HEK293 (cell line): ENCODE measurements at regions of chr9 and their contacts with region 1.

Region 1: GRCh38 chr9:137240861-137241489 is at the start of gene TUBB4B:
- H3K4me3 ChIP-seq: peak within 1 kb of the TSS; percentile 83
- H3K27ac ChIP-seq: peak within 1 kb of the TSS; percentile 93
- H3K4me1 ChIP-seq: peaks cover 6% of the 10 kb centered on the region; the same call in 1 of the 2 replicates
- CTCF ChIP-seq: no peak

Region 2: DNA sequence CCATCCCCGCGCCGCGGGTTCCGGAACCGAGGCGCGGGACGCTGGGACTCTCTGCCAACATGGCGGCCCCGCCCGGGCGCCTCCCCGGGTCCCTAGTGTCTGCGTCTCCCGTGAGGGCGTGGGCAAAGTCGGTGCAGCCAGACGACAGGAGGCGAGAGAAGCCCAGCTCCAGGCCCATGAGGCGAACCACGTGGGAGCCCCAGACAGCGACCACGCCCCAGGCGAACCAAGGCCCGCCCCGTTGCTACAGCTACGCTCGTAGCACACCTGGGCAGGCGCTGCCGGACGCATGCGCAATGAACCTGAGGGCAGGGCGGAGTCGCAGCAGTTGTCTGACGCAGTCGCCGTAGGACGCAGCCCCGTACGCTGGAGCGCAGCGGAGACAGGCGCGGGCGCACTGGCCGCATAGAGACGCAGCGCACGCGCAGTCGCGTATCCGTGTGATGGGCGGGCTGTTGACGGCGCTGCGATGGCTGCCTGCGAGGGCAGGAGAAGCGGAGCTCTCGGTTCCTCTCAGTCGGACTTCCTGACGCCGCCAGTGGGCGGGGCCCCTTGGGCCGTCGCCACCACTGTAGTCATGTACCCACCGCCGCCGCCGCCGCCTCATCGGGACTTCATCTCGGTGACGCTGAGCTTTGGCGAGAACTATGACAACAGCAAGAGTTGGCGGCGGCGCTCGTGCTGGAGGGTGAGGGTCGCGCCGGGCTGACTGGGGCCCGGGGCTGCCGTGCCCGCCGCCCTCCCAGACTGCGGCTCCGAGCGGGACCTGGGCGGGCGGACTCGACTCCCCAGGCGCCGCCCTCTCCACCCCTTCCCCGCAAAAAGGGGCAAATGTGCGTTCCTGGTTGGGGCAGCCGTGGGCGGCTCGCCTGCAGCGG is 154.2 kb before region 1 on chr9 and contains the start of gene MAN1B1:
- CTCF ChIA-PET with region 1: interaction called, 6 read pairs
- POLR2A ChIA-PET with region 1: interaction called, 41 read pairs
- H3K4me3 ChIP-seq: peak within 1 kb of the TSS; percentile 57
- H3K27ac ChIP-seq: peak within 1 kb of the TSS; percentile 70
- H3K4me1 ChIP-seq: 0 out of 2 replicates have a peak, but pooled peaks cover 3% of the 10 kb centered on the region
- CTCF ChIP-seq: no peak

Region 3: DNA sequence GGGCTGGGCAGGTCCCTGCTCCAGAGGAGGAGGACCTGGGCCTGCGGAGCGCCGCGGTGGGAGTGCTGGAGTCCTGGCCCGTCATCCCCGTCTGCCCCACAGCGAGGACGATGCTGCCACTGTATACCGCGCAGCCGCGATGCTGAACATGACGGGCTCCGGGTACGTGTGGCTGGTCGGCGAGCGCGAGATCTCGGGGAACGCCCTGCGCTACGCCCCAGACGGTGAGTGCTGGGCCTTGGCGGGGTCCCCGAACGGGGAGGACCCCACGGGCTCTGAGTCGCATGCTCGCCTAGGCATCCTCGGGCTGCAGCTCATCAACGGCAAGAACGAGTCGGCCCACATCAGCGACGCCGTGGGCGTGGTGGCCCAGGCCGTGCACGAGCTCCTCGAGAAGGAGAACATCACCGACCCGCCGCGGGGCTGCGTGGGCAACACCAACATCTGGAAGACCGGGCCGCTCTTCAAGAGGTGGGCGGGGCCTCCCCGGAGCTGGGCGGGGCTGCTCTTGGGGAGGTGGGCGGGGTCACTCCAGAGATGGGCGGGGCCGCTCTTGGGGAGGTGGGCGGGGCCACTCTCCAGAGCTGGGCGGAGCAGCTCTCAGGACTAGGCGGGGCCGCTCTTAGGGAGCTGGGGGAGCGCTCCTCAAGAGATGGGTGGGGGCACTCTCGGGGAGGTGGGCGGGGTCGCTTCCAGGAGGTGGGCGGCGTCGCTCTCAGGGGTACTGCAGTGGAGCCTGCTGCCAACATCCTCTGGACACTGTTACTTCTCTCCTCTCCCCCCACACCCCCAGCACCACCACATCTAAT is 84.2 kb before region 1 on chr9:
- CTCF ChIA-PET with region 1: interaction called, 5 read pairs
- POLR2A ChIA-PET with region 1: interaction called, 20 read pairs
- H3K4me3 ChIP-seq: no peak overlapping the region
- H3K27ac ChIP-seq: no peak overlapping the region
- H3K4me1 ChIP-seq: no peaks in the 10 kb centered on the region
- CTCF ChIP-seq: no peak

Region 4: DNA sequence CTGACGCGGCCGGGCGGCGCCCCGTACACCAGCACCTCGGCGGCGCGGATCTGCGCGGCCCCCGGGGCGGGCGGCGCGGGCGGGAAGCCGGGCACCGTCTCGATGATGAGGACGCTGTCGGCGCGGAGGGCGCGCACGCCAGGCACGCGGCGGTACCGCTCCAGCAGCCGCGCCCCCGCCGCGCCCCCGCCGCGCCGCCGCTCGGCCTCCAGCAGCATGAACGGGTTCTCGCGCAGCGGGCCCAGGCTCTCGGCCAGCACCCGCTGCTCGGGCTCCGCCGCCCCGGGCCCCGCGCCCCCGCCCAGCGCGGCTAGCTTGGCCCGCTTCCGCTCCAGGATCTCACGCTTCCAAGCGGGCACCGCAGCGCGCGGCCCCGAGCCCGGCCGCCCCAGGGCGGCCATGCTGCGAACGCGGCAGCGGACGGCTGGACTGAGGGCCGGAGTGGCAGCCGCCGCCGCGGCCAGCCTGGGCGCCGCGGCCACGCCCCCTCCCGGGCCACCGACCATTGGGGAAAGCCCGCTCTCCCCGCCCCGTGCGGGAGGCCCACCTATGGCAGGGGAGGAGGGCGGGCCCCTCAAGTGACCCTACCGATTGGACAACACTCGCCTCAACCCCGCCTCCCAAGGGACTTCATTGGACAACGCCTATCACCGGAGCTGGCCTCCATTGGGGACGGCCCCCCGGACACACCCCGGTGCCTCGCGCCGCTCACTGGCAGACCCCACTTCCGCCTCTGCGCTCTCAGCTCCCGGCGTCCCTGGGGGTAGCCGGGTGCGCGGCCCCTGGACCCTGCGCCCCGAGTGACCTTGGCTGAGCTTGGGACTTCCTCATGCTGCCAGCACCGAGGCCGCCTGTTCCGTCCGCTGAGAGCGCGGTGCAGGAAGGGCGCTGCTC is 40.4 kb before region 1 on chr9 and contains the start of gene TPRN:
- CTCF ChIA-PET with region 1: interaction called, 10 read pairs
- POLR2A ChIA-PET with region 1: interaction called, 34 read pairs
- H3K4me3 ChIP-seq: peak within 1 kb of the TSS; percentile 86
- H3K27ac ChIP-seq: peak within 1 kb of the TSS; percentile 57; the same call in 1 of the 2 replicates
- H3K4me1 ChIP-seq: peaks cover 9% of the 10 kb centered on the region
- CTCF ChIP-seq: no peak

Region 5: DNA sequence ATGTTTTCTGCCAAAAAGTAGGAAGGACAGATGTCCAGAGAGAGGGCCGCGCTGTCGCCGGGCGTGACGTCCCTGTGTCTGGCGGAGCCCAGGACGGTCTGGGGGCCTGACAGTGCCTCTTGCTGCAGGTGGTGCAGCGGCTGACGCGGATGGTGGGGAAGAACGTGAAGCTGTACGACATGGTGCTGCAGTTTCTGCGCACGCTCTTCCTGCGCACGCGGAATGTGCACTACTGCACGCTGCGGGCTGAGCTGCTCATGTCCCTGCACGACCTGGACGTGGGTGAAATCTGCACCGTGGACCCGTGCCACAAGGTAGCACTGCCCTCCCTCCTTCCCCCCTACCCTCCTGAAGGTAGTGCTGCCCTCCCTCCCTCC is 21.9 kb after region 1 on chr9:
- CTCF ChIA-PET with region 1: interaction called, 45 read pairs
- POLR2A ChIA-PET with region 1: interaction called, 336 read pairs
- H3K4me3 ChIP-seq: no peak overlapping the region
- H3K27ac ChIP-seq: no peak overlapping the region
- H3K4me1 ChIP-seq: no peaks in the 10 kb centered on the region
- CTCF ChIP-seq: no peak

Region 6: GRCh38 chr9:137302176-137302994 is 61.4 kb after region 1 on chr9 and contains the start of gene NRARP:
- CTCF ChIA-PET with region 1: interaction called, 4 read pairs
- POLR2A ChIA-PET with region 1: interaction called, 22 read pairs
- H3K4me3 ChIP-seq: peak within 1 kb of the TSS; percentile 73
- H3K27ac ChIP-seq: peak within 1 kb of the TSS; percentile 91
- H3K4me1 ChIP-seq: peaks cover 15% of the 10 kb centered on the region
- CTCF ChIP-seq: peak; percentile 84

Region 7: DNA sequence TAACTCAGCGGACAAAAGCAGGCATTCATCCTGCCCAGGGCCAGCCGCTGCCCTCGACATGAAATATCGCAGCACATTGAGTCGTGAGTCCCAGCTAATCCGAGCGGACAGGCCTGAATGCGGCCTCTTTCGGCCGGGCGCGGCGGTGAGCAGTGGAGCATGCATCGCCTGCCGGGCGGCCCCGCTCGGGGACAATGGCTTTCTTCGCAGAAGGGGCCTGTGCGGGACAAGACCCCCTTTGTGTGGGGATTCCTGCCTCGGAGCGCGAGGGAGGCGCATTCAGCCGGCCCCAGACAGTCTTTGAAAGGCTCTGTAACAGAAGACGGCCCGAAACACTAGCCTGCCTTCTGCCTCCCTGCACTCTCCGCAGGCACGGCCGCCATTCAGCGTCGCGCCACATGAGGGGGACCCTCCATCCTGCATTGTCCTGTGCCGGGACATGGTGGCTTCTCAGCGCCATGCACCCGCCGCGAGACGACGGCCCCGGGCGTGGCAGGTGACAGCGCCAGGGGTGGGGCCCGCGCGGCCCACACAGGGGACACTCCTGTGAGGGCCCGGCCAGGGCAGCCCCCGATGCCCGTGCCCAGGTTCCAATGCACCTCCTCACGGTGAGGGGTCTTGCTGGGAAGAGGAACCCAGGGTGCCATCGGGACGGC is 130.0 kb after region 1 on chr9:
- CTCF ChIA-PET with region 1: no interaction called
- POLR2A ChIA-PET with region 1: no interaction called
- H3K4me3 ChIP-seq: no peak overlapping the region
- H3K27ac ChIP-seq: no peak overlapping the region
- H3K4me1 ChIP-seq: no peaks in the 10 kb centered on the region
- CTCF ChIP-seq: no peak